Heart left ventricle (tissue), 16 donors: ENCODE measurements at regions of chr3 and their contacts with region 1.

Region 1: DNA sequence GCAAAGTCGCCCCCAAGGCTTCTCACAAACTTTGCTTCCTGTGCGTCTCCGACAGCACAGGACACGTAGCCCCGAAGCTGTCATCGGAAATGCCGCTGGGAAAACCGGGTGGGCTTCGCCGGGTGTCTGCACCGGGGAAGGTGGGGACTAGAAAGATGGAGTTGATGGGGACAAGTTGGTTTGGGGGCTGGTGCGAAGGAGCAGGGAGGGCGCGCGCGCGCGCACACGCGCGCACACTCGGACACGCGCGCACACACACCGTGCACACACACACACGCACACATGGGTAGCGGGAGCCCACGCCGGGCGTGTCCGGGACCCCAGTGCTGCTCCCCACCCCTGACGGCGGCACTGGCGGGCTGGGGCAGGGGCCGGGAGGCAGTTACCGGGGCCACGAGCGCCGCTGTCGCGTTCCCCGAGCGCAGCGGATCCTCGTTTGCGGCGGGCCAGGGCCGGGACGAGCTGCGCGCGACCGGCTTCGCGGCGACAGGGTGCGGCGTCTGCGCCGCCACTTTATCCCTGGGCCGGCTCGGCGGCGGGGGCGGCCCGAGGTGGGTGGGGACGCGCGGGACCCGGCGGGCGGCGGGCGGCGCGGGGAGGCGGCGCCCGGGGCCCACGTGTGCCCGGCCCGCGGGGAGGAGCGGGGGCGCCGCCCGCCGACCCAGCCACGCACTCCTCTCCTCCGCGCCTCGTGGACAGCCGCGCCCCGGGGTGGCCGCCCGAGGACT is 547 bp upstream of the MGLL start:
- DNase-seq: peak; percentile 64 to 87 (median 76)
- ATAC-seq: peak; percentile 62 to 89 (median 81)
- H3K4me3 ChIP-seq: peak overlapping the region; percentile 67 to 99 (median 86)
- H3K27ac ChIP-seq: peak overlapping the region; percentile 75 to 97 (median 92)
- H3K4me1 ChIP-seq: peaks cover 0 to 46% (median 29%) of the 10 kb centered on the region in 12 donors
- H3K27me3 ChIP-seq: no peaks in the 10 kb centered on the region
- CTCF ChIP-seq: peak in 6 of 12 donors; percentile 31 to 54 (median 38)
- POLR2A ChIP-seq: peak in 1 of 2 donors; percentile 53

Region 2: GRCh38 chr3:127590593-127591477 is 232.0 kb before region 1 on chr3 and contains the start of gene TPRA1:
- intact Hi-C with region 1: loop called in 1 of 10 experiments (anchors 5 kb)
- DNase-seq: peak; percentile 91 to 96 (median 93)
- ATAC-seq: peak; percentile 92 to 96 (median 94)
- H3K4me3 ChIP-seq: peak within 1 kb of the TSS; percentile 77 to 99 (median 96)
- H3K27ac ChIP-seq: peak within 1 kb of the TSS; percentile 85 to 97 (median 94)
- H3K4me1 ChIP-seq: peaks cover 0 to 48% (median 34%) of the 10 kb centered on the region in 12 donors
- H3K27me3 ChIP-seq: no peaks in the 10 kb centered on the region
- CTCF ChIP-seq: peak in 7 of 12 donors; percentile 14 to 54 (median 41)
- POLR2A ChIP-seq: peak in 1 of 2 donors; percentile 79
- total RNA-seq, gene TPRA1: 13.4 to 29.0 (median 20.4) TPM

Region 3: DNA sequence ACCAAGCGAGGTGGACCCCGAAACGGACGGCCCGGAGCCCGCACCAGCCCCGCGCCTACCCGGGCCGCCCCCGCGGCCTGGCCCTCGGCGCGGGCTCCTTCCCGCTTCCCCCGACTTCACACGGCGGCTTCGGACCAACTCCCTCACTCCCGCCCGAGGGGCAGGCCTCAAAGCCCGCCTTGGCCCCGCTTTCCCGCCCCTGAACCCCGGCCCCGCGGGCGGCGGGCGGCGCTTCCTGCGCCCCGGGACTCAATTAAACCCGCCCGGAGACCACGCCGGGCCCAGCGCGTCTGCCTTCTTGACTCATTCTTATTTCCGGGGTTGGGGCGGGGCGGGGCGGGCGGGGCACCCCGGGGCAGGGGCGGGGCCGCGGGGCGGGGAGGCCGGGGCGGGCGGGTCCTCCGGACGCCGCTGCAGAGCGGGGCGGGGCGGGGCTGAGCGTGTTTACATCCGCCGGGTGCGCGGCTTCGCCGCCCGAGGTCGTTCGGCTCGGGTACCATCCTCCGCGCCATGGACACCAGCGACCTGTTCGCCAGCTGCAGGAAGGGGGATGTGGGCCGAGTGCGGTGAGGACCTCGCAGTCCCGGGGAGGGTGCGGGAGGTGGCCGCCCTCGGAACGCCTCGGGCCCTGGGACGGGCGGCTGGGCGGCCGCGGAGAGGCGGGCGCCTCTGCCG is 150.2 kb before region 1 on chr3 and contains the start of gene ABTB1:
- intact Hi-C with region 1: loop called in 3 of 10 experiments (anchors 5 kb)
- DNase-seq: peak; percentile 86 to 93 (median 89)
- ATAC-seq: peak; percentile 67 to 92 (median 86)
- H3K4me3 ChIP-seq: peak within 1 kb of the TSS; percentile 80 to 100 (median 93)
- H3K27ac ChIP-seq: peak within 1 kb of the TSS; percentile 57 to 97 (median 93)
- H3K4me1 ChIP-seq: peaks cover 2 to 33% (median 22%) of the 10 kb centered on the region in 12 donors
- H3K27me3 ChIP-seq: no peaks in the 10 kb centered on the region
- CTCF ChIP-seq: no peak
- POLR2A ChIP-seq: peak in 1 of 2 donors; percentile 82
- total RNA-seq, gene ABTB1: 15.4 to 39.3 (median 30.9) TPM

Region 4: DNA sequence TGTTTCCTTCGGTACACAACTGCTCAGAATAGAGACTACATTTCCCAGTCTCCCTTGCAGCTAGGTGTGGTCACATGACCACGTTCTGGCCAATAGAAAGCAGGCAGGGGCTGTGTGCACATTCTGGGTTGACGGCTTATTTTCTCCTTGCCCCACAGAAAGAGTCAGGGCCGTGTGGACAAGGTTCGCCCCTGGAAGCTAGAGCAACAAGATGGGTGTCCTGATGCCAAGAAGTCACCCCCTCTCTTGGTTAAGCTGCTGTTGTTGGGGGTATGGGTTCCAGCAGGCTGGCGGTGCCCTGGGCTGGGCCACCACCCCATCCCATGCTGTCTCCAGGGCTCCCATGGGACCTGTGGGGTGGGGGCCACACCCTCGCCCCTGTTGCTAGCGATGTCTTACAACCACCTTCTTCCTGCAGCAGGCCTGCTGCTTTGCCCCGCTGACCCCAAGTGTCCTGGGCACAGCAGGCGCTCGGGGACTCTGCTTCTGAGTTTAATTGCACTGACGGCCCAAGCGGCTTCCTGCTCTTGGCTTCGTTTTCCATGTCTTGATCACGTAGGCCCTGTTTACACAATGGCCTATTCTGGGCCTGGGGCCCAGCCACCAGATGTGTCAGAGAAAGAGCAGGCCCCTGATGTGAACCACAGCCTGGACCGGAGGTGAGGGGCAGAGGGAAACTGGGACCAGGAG is 125.2 kb before region 1 on chr3:
- intact Hi-C with region 1: loop called in 9 of 10 experiments (anchors 2 to 5 kb)
- DNase-seq: peak; percentile 87 to 93 (median 88)
- ATAC-seq: peak; percentile 68 to 77 (median 74)
- H3K4me3 ChIP-seq: peak overlapping the region in 5 of 12 donors; percentile 7 to 30 (median 19)
- H3K27ac ChIP-seq: peak overlapping the region; percentile 88 to 98 (median 93)
- H3K4me1 ChIP-seq: peaks cover 17 to 89% (median 67%) of the 10 kb centered on the region in 12 donors
- H3K27me3 ChIP-seq: no peaks in the 10 kb centered on the region
- CTCF ChIP-seq: no peak
- POLR2A ChIP-seq: no peak

Region 5: DNA sequence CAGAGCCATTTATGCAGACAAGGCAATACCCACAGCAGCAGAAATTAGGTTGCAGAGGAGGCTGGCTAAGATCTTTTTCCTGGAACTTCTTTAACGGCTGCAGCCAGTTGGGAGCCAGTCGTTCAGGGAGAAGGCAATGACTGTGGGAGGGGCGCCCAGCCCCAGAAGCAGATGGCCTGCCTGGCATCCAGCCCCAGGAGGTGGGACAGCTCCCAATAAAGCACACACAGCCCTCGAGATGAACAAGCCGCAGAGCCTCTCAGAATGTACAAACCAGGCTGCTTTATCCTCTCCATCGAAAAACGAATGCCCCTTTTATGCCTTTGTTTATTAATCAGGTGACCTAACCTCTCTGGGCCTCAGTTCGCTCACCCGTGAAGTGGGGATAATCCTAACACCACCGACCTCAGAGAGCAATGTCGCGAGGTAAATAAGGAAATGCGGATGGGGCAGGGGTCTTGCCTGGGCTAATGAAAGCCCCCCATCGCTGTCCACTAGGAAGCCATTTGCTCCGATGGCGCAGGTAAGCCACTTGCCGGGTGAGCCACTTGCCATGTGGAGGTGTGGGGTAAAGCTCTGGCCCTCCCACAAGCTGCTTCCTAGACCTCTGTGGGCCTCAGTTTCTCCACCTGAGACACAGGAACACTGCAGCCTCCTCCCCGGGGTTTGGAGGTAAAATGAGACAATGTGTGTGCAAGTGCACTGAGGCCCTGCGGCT is 36.4 kb before region 1 on chr3:
- intact Hi-C with region 1: loop called in 6 of 10 experiments (anchors 2 to 5 kb)
- DNase-seq: peak; percentile 83 to 93 (median 87)
- ATAC-seq: peak; percentile 75 to 82 (median 81)
- H3K4me3 ChIP-seq: no peak overlapping the region
- H3K27ac ChIP-seq: peak overlapping the region in 11 of 12 donors; percentile 18 to 89 (median 62)
- H3K4me1 ChIP-seq: peaks cover 7 to 95% (median 82%) of the 10 kb centered on the region in 12 donors
- H3K27me3 ChIP-seq: no peaks in the 10 kb centered on the region
- CTCF ChIP-seq: no peak
- POLR2A ChIP-seq: no peak

Region 6: GRCh38 chr3:127988770-127989557 is 166.1 kb after region 1 on chr3:
- intact Hi-C with region 1: no loop called
- DNase-seq: no peak
- ATAC-seq: no peak
- H3K4me3 ChIP-seq: no peak overlapping the region
- H3K27ac ChIP-seq: peak overlapping the region in 2 of 12 donors; percentile 5 to 62
- H3K4me1 ChIP-seq: peaks cover 0 to 18% (median 6%) of the 10 kb centered on the region in 12 donors
- H3K27me3 ChIP-seq: no peaks in the 10 kb centered on the region
- CTCF ChIP-seq: no peak
- POLR2A ChIP-seq: no peak

Region 7: GRCh38 chr3:128824132-128824850 is 1001.4 kb after region 1 on chr3:
- intact Hi-C with region 1: no loop called
- DNase-seq: no peak
- ATAC-seq: peak; percentile 13 to 43 (median 32)
- H3K4me3 ChIP-seq: no peak overlapping the region
- H3K27ac ChIP-seq: no peak overlapping the region
- H3K4me1 ChIP-seq: peaks cover 0 to 21% (median 2%) of the 10 kb centered on the region in 12 donors
- H3K27me3 ChIP-seq: no peaks in the 10 kb centered on the region
- CTCF ChIP-seq: no peak
- POLR2A ChIP-seq: no peak